Gastrocnemius medialis (tissue), 4 donors: ENCODE measurements at regions of chr18 and their contacts with region 1.

Region 1: GRCh38 chr18:34352385-34353163 is 127.9 kb upstream of the NOL4 start:
- DNase-seq: no peak
- ATAC-seq: no peak
- H3K4me3 ChIP-seq: no peak overlapping the region
- H3K27ac ChIP-seq: no peak overlapping the region
- H3K4me1 ChIP-seq: no peaks in the 10 kb centered on the region
- H3K27me3 ChIP-seq: no peaks in the 10 kb centered on the region
- CTCF ChIP-seq: peak in 2 of 5 experiments; percentile 16 to 46
- POLR2A ChIP-seq: no peak

Region 2: DNA sequence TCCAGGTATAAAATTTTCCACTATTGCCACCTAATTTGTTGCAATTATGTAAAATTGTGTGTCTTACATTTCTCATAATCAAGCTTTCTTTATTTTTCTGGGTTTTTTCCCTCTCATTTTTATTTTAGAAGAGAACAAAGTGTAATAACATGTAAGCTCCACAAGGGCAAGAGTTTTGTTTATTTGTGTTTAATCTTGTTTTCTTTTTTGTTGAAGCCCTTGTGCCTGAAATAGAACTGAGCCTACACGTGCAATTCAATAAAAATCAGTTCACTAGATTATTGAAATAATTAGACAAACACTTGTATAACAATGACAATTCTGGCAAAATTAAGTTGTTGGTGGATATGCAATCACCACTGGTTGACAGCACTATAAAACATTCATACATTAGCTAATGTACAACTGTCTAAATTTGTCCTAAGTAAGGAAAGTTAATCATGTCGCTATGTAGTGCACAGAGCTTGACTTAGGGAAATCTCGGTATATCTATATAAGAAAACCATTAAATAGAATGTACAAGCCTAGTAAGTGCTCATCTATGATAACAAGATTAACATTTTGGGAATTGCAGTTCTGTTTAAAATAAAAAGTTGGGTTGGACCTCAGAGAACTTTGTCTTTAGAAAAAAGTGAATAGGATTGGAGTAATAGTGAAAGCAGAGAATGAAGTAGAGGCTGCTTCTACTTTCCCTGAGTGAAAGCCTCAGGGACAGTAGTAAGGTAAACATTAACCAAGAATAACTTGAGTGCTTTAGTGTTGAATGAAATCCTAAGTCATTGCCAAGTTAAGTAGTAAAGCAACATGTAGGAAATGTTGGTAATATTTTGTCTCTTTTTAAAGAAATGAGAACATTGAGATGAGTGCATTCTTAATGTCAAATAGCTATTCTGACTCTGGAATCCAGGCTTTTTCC is 90.5 kb before region 1 on chr18:
- in situ Hi-C with region 1: loop called in 1 of 4 experiments (anchors 25 kb)
- intact Hi-C with region 1: no loop called
- DNase-seq: no peak
- ATAC-seq: no peak
- H3K4me3 ChIP-seq: no peak overlapping the region
- H3K27ac ChIP-seq: no peak overlapping the region
- H3K4me1 ChIP-seq: no peaks in the 10 kb centered on the region
- H3K27me3 ChIP-seq: no peaks in the 10 kb centered on the region
- CTCF ChIP-seq: no peak
- POLR2A ChIP-seq: no peak

Region 3: DNA sequence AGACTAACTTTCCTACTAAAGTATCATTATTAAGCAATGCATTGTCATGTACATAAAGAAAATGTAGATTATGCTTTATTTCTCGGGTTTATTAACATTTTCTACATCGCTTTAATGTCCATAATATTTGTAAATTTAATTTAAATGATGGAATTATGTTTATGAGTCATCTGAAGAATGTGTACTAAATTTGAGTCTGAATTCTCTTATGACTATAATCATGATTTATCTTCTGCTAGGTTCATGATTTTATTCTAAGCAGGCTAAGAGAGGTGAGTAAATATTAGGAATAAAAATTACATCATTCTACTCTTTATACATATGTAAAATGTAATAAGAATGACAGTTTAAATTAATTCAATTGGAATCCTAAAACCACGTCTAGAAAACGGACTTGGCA is 78.5 kb after region 1 on chr18:
- in situ Hi-C with region 1: no loop called
- intact Hi-C with region 1: no loop called
- DNase-seq: no peak
- ATAC-seq: no peak
- H3K4me3 ChIP-seq: no peak overlapping the region
- H3K27ac ChIP-seq: no peak overlapping the region
- H3K4me1 ChIP-seq: no peaks in the 10 kb centered on the region
- H3K27me3 ChIP-seq: no peaks in the 10 kb centered on the region
- CTCF ChIP-seq: no peak
- POLR2A ChIP-seq: no peak

Region 4: DNA sequence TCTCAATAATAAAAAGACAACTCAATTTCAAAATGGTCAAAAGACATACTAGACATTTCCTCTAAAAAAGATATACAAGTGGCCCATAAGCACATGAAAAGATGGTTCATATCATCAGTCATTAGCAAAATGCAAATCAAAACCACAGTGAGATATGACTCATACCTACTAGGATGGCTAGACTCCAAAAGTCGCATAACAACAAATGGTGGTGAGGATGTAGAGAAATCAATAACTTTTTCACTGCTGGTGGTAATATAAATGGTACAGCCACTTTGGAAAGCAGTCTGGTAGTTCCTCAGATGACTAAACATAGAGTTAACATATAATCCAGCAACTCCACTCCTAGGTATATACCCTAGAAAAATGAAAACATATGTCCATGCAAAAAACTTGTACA is 114.5 kb after region 1 on chr18:
- in situ Hi-C with region 1: no loop called
- intact Hi-C with region 1: no loop called
- DNase-seq: no peak
- ATAC-seq: no peak
- H3K4me3 ChIP-seq: no peak overlapping the region
- H3K27ac ChIP-seq: no peak overlapping the region
- H3K4me1 ChIP-seq: no peaks in the 10 kb centered on the region
- H3K27me3 ChIP-seq: no peaks in the 10 kb centered on the region
- CTCF ChIP-seq: no peak
- POLR2A ChIP-seq: no peak

Region 5: DNA sequence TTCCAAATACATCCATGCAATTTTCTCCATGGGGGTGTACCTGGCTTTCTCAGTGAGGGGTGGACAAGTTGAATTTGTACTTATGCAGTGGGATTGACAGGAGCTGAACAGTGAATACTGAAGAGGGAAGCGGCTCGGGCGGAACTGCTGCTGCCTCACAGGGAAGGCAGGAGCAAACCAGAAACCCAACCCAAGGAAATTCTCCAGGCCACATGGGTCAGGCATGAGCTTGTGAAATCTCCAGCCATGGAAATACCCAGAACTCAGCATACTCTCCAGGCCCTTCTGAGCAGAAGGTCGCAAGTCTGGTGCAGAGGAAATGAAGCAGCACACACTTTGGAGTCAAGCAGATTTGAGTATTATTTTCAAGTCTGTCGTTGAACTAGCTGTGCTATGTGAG is 1171.7 kb after region 1 on chr18:
- in situ Hi-C with region 1: no loop called
- intact Hi-C with region 1: no loop called
- DNase-seq: peak; percentile 9 to 26
- ATAC-seq: peak in 1 of 2 donors; percentile 42
- H3K4me3 ChIP-seq: no peak overlapping the region
- H3K27ac ChIP-seq: peak overlapping the region in 2 of 4 donors; percentile 34 to 43
- H3K4me1 ChIP-seq: peaks cover 15 to 28% of the 10 kb centered on the region in 2 donors
- H3K27me3 ChIP-seq: no peaks in the 10 kb centered on the region
- CTCF ChIP-seq: no peak
- POLR2A ChIP-seq: no peak